Activated B cell treated with CpG ODN at 0.5 μM for 24 hours (primary cell): ENCODE measurements at regions of chr10 and their contacts with region 1.

Region 1: DNA sequence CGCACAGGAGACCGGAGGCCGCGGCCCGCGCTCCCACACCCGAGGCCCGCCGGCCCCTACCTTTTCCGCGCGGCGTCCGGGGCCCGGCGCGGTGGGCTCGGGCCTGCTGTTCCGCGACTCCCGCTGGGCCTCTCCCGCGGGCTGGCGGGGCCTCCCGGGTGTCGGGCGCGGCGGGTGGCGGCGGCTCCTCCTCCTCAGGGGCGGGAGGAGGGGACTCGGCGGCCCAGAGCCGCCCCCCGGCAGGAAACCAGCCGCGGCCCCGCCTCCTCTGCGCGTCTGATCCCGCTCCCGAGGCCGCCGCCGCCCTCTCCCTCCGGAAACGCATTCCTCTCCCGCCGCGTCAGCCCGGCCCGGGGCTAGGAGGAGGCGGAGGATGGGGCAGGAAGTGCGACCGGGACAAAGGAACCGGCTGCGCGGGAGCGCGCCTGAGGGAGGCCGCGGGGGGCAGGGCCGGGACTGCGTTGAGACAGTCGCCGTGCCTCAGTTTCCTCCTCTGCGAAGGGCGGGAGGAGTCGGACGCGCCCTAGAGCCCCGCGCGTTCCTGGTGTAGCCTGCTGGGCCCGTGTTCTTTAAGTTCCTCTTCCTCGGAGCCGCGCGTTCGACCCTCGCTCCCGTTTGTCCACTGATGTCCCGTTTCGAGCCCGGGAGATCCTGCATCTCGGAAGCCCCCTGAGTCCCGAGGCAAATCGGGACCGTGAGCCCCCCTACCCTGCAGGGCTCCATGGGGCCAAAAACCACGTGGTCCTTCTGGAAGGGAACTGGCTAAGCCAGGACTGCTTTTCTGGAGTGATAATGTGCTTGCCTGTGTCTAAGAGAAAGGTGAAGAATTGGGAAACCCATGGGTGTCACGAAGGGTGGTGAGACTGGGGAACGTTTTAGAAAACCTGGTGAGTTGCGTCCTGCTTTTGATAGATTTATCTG is at the start of gene ITGB1:
- DNase-seq: peak; percentile 85
- ATAC-seq: peak; percentile 83
- H3K4me3 Mint-ChIP-seq: peak within 1 kb of the TSS; percentile 86
- H3K27ac Mint-ChIP-seq: peak within 1 kb of the TSS; percentile 95
- H3K4me1 Mint-ChIP-seq: peaks cover 72% of the 10 kb centered on the region
- H3K27me3 Mint-ChIP-seq: no peaks in the 10 kb centered on the region
- CTCF ChIP-seq: no peak
- total RNA-seq, gene ITGB1: 80.3 and 87.4 TPM in 2 replicates

Region 2: GRCh38 chr10:32378363-32379317 is 579.7 kb before region 1 on chr10:
- CTCF ChIA-PET with region 1: no interaction called
- POLR2A ChIA-PET with region 1: no interaction called
- intact Hi-C with region 1: loop called (anchors 5 kb)
- DNase-seq: peak; percentile 73
- ATAC-seq: peak; percentile 94
- H3K4me3 Mint-ChIP-seq: no peak overlapping the region
- H3K27ac Mint-ChIP-seq: no peak overlapping the region
- H3K4me1 Mint-ChIP-seq: peaks cover 21% of the 10 kb centered on the region
- H3K27me3 Mint-ChIP-seq: no peaks in the 10 kb centered on the region
- CTCF ChIP-seq: no peak

Region 3: DNA sequence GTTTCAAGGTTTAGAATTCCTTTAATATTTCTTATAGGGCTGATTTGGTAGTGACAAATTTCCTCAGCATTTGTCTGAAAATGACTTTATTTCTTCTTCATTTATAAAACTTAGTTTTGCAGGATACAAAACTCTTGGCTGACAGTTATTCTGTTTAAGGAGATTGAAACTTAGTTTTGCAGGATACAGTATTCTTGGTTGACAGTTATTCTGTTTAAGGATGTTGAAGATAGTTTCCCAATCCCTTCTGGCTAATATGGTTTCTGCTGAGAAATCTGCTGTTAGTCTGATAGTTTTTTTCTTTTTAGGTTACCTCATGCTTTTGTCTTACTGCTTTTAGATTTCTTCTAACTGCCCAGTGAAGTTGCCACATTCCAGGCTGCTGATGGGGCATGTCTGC is 187.1 kb before region 1 on chr10:
- CTCF ChIA-PET with region 1: no interaction called
- POLR2A ChIA-PET with region 1: no interaction called
- intact Hi-C with region 1: no loop called
- DNase-seq: no peak
- ATAC-seq: no peak
- H3K4me3 Mint-ChIP-seq: no peak overlapping the region
- H3K27ac Mint-ChIP-seq: no peak overlapping the region
- H3K4me1 Mint-ChIP-seq: no peaks in the 10 kb centered on the region
- H3K27me3 Mint-ChIP-seq: peaks cover 1% of the 10 kb centered on the region
- CTCF ChIP-seq: no peak

Region 4: DNA sequence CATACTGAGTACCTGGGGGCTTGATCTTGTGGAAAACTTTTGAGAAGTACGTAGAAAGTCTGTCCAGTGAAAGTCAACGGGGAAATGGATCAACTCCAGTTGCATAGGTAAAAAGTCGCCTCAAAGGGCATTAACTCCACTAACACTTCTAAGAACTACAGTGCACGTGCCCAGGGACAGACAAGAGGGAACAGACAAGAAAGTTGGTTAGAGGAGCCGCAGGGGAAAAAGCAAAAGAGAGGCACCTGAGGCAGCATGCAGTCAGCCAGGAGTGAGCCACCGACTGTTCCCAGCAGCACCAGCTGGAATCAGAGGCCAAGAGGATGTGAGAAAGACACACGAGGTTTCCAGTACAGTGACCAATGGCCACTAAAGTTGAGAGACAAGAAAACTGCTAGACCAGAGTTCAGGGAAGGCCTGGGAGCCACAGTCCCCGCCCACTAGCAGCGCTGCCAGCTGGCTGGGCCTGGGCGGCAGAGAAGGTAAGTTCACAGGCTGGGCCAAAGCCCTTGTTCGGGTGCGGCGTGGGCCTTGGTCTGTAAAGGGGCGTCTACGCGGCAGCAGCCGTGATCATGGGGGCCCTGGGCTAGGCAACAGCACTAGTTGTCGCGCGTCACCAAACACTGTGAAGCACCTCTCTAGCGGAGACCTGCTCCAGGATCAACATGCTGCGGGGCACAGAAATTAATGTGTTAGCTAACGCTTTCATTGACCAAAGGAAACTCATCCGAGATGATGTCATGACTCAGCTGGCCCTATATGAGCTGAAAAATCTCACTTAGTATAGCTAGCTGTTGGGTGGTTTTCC is 14.3 kb before region 1 on chr10:
- CTCF ChIA-PET with region 1: no interaction called
- POLR2A ChIA-PET with region 1: interaction called, 7 read pairs
- intact Hi-C with region 1: loop called (anchors 1 kb)
- DNase-seq: no peak
- ATAC-seq: no peak
- H3K4me3 Mint-ChIP-seq: peak overlapping the region; percentile 58
- H3K27ac Mint-ChIP-seq: peak overlapping the region; percentile 88
- H3K4me1 Mint-ChIP-seq: peaks cover 74% of the 10 kb centered on the region
- H3K27me3 Mint-ChIP-seq: no peaks in the 10 kb centered on the region
- CTCF ChIP-seq: no peak

Region 5: GRCh38 chr10:32980558-32981468 is 22.5 kb after region 1 on chr10:
- CTCF ChIA-PET with region 1: no interaction called
- POLR2A ChIA-PET with region 1: interaction called, 13 read pairs
- intact Hi-C with region 1: loop called (anchors 1 kb)
- DNase-seq: peak; percentile 57
- ATAC-seq: peak; percentile 97
- H3K4me3 Mint-ChIP-seq: peak overlapping the region; percentile 96
- H3K27ac Mint-ChIP-seq: peak overlapping the region; percentile 87
- H3K4me1 Mint-ChIP-seq: peaks cover 13% of the 10 kb centered on the region
- H3K27me3 Mint-ChIP-seq: no peaks in the 10 kb centered on the region
- CTCF ChIP-seq: no peak

Region 6: DNA sequence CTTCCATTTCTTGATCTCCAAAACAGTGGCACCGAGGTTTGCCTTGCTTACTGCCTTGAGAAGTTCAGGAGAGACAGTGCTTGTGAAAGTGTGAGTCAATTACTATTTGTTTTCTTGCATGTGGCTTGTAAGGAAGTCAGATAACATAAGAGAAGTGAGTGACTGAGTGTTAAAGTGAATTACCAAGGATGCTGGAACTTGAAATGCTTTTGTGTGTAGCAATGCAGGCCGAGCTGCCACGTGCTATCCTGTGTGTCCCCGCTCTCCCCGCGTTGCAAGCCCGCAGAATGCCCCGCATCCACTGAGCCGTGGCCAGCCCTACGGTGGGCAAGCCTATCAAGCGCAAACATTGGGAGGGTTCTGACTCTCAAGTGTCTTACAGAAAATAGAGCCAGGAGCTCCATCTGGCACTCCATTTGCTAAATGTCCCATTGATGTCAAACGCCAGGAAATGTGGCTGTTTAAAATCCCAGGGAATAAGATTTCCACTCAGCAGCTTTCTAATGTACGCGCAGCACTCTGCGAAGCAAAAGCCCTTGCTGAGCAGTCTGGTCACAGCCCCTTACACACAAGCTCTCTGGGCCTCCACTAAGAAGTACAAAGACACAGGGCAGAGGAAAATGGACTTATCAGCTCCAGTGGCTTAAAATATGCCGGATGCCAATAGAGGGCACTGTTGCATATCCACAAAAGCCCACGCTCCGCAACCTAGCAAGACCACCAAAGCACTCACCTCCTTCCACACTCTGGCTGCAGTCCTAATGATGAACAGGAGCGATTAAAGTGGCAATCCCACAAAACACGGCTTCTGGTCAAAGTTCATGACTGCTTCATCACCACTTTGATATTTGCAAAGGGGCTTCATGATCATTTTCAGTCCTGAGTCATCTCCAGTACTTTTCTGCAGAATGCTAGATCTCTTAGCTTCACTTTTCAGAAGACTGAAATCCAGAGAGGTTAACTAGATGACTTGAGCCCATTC is 157.7 kb after region 1 on chr10:
- CTCF ChIA-PET with region 1: no interaction called
- POLR2A ChIA-PET with region 1: no interaction called
- intact Hi-C with region 1: loop called (anchors 5 kb)
- DNase-seq: no peak
- ATAC-seq: no peak
- H3K4me3 Mint-ChIP-seq: no peak overlapping the region
- H3K27ac Mint-ChIP-seq: peak overlapping the region; percentile 64
- H3K4me1 Mint-ChIP-seq: peaks cover 88% of the 10 kb centered on the region
- H3K27me3 Mint-ChIP-seq: no peaks in the 10 kb centered on the region
- CTCF ChIP-seq: no peak

Region 7: DNA sequence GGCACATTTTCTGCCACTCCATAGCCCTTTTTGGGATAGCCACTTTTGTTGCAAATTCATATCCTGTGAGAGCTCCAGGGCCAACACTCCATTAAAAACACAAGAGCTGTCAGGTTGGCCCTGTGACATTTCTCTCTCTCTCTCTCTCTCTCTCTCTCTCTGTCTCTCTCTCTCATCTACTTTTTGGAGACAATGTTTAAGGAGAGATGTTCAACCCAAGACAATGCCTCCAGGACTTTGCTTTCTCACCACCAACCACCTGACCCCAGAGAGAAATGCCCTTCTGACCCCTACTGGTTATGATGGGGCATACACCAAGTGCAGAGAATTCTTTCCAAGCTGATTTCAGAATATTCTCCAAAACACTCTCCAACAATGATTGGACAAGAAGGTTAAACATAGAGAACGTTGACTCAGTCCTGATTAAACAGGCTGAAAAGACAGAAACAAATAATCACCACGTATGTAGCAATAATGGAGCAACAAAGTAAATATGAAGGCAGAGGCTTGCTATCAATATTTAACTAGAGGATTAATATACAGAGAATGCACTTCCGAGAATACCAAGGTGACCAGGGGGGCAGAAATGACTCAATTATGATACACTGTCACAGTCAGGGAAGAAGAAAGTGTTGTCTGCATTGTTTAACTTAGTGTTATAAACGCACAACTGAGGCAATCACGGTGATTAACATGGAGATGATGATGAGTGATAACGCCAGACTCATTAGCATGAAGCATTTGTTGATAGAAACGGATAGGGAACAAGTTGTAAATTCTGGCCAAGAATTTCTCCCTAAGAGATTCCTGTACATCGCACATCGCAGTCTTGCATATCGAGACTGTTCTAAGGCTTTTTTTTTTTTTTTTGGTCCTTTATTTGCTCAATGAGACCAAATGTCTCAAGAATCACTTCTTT is 197.6 kb after region 1 on chr10:
- CTCF ChIA-PET with region 1: no interaction called
- POLR2A ChIA-PET with region 1: interaction called, 5 read pairs
- intact Hi-C with region 1: loop called (anchors 5 kb)
- DNase-seq: no peak
- ATAC-seq: peak; percentile 65
- H3K4me3 Mint-ChIP-seq: no peak overlapping the region
- H3K27ac Mint-ChIP-seq: no peak overlapping the region
- H3K4me1 Mint-ChIP-seq: peaks cover 41% of the 10 kb centered on the region
- H3K27me3 Mint-ChIP-seq: peaks cover 2% of the 10 kb centered on the region
- CTCF ChIP-seq: no peak